ENCODE measurements at regions of chr6 and their contacts with region 1.

Region 1: GRCh38 chr6:104789770-104790190 is 69.9 kb downstream of the HACE1 start:
- DNase-seq: no peak
- H3K4me3 Mint-ChIP-seq: peak overlapping the region; percentile 52
- H3K27ac Mint-ChIP-seq: peak overlapping the region; percentile 97
- H3K4me1 Mint-ChIP-seq: peaks cover 40% of the 10 kb centered on the region
- H3K27me3 Mint-ChIP-seq: no peaks in the 10 kb centered on the region

Region 2: DNA sequence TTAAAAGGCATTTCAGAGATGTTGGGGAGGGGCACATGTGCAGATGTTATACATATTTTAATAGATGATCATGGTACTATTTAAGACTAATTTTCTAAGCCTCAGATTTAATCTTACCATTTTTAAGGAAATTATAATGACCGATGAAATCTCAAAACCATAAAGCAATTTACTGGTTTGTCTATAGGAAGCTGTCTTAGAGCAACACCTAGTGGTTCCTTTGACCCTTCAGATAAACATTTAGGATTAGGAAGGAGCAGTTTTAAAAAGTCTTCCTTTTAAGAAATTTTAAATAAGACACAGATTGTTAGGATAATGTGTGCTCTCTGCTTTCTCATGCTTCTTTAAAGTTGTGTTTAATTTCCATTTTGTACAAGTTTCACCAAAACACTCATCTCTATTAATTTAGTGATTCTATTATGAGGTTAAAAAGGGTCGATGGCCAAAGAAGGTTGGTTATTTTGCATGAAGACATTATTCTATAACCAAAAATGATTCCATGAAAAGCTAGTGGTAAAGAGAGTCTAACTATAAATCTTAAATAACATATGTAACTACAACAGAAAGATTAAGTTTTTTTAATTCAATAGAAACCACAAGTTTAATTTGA is 306.4 kb before region 1 on chr6:
- intact Hi-C with region 1: no loop called
- DNase-seq: no peak
- H3K4me3 Mint-ChIP-seq: no peak overlapping the region
- H3K27ac Mint-ChIP-seq: no peak overlapping the region
- H3K4me1 Mint-ChIP-seq: no peaks in the 10 kb centered on the region
- H3K27me3 Mint-ChIP-seq: no peaks in the 10 kb centered on the region

Region 3: GRCh38 chr6:104580452-104580851 is 209.3 kb before region 1 on chr6:
- intact Hi-C with region 1: no loop called
- DNase-seq: no peak
- H3K4me3 Mint-ChIP-seq: no peak overlapping the region
- H3K27ac Mint-ChIP-seq: no peak overlapping the region
- H3K4me1 Mint-ChIP-seq: no peaks in the 10 kb centered on the region
- H3K27me3 Mint-ChIP-seq: no peaks in the 10 kb centered on the region

Region 4: GRCh38 chr6:104680539-104680938 is 109.2 kb before region 1 on chr6:
- intact Hi-C with region 1: no loop called
- DNase-seq: no peak
- H3K4me3 Mint-ChIP-seq: no peak overlapping the region
- H3K27ac Mint-ChIP-seq: no peak overlapping the region
- H3K4me1 Mint-ChIP-seq: peaks cover 7% of the 10 kb centered on the region
- H3K27me3 Mint-ChIP-seq: no peaks in the 10 kb centered on the region

Region 5: DNA sequence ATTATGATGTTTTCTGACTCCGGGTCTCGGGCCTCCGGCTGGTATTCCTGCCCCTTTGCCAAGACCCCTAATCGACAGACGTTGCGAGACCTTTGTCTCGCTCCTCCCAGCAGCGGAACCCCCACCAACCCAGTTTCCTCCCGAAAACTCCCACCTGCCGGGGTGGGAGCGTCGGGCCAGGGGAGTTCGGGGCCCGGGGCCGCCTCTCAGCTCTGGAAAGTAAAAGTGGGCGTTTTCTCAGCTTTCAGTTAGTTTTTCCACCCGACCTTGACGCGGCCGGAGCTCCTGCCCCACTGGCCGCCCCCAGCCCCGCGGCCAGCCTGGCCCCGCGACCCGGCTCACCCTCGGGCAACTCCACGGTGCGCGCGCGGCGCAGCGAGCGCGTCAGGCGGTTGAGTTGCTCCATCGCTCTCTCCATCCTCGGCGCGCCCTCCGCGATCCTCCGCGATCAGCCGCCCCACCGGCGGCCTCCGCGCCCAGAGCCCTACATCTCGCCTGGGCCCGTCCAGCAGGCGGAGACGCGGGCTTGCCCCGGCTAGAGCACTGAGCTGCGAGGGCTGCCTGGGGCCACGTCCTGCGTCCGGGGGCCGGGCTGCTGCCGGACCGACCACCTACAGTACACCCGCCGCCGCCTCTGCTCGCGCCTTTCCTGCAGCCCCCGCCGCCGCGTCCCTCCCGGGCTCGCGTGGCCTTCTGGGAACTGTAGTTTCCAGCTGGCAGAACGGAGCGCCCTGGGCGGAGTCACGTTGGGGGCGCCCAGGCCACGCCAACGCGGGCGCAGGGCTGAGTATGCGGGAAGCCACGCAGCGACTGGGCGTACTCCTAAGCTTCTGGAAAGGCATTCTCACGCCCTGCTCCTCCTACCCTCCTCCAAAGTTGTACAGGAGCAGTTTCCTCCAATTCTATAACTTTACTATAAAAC is 69.7 kb after region 1 on chr6 and contains the start of gene HACE1:
- intact Hi-C with region 1: loop called (anchors 1 kb)
- DNase-seq: peak; percentile 84
- H3K4me3 Mint-ChIP-seq: peak within 1 kb of the TSS; percentile 94
- H3K27ac Mint-ChIP-seq: peak within 1 kb of the TSS; percentile 82
- H3K4me1 Mint-ChIP-seq: peaks cover 22% of the 10 kb centered on the region
- H3K27me3 Mint-ChIP-seq: peaks cover 2% of the 10 kb centered on the region
- total RNA-seq, gene HACE1: 19.0 and 19.2 TPM in 2 replicates

Region 6: GRCh38 chr6:104940881-104941728 is 151.3 kb after region 1 on chr6:
- intact Hi-C with region 1: loop called (anchors 5 kb)
- DNase-seq: peak; percentile 24
- H3K4me3 Mint-ChIP-seq: peak overlapping the region; percentile 57
- H3K27ac Mint-ChIP-seq: no peak overlapping the region
- H3K4me1 Mint-ChIP-seq: peaks cover 3% of the 10 kb centered on the region
- H3K27me3 Mint-ChIP-seq: peaks cover 37% of the 10 kb centered on the region

Region 7: DNA sequence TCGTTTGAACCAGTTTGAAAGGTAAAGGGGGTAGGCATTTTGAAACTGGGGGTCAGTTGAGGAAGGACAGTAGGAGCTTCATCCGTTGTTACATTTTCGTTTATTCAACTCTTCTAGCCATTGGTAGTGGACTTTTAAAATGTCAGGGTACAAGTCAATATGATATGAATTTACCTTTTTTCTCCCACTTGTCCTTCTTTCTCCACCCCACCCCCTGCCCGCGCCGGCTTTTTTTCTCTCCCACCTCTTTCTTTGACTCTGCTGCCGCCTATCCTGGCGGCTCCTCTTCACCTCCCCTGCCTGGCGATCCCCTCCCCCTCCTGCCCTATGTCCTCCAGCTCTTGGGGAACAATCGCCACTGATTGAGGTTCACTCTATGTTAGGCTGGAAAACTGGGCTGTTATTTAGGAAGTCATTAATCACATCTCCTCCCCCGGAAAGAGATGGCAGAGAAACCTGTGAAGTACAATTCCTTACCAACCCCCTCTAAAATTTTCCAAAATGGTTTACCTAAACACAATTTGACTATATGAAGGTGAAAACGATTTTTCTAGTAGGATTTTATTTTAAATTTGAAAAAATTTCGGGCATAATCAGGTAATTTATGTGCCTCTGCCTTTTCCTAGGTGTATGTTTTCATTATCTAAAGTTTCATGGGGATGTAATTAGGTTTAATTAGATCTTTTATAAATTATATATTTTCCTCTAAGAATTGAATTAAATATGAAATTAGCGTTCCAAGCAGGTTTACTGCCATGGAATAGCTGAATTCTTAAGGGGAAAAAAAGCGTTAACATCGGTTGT is 166.3 kb after region 1 on chr6:
- intact Hi-C with region 1: loop called (anchors 5 kb)
- DNase-seq: no peak
- H3K4me3 Mint-ChIP-seq: no peak overlapping the region
- H3K27ac Mint-ChIP-seq: no peak overlapping the region
- H3K4me1 Mint-ChIP-seq: peaks cover 18% of the 10 kb centered on the region
- H3K27me3 Mint-ChIP-seq: peaks cover 77% of the 10 kb centered on the region

Region 8: GRCh38 chr6:105077596-105078385 is 288.0 kb after region 1 on chr6:
- intact Hi-C with region 1: loop called (anchors 2 kb)
- DNase-seq: no peak
- H3K4me3 Mint-ChIP-seq: no peak overlapping the region
- H3K27ac Mint-ChIP-seq: no peak overlapping the region
- H3K4me1 Mint-ChIP-seq: no peaks in the 10 kb centered on the region
- H3K27me3 Mint-ChIP-seq: peaks cover 42% of the 10 kb centered on the region

Region 9: GRCh38 chr6:105402939-105403935 is 613.5 kb after region 1 on chr6 and contains the start of gene PREP:
- intact Hi-C with region 1: loop called (anchors 5 kb)
- DNase-seq: peak; percentile 82
- H3K4me3 Mint-ChIP-seq: peak within 1 kb of the TSS; percentile 96
- H3K27ac Mint-ChIP-seq: peak within 1 kb of the TSS; percentile 79
- H3K4me1 Mint-ChIP-seq: peaks cover 45% of the 10 kb centered on the region
- H3K27me3 Mint-ChIP-seq: peaks cover 7% of the 10 kb centered on the region
- total RNA-seq, gene PREP: 52.7 and 52.9 TPM in 2 replicates

Measured in activated T-helper 2 cell treated with anti-CD3 and anti-CD28 coated beads, Interferon-gamma antibody, Interleukin-2, Interleukin-4, amounts not matched to agents 10 μg/mL and 5 μg/mL and 100 μg/mL, durations not matched to agents 14 hours and 24 hours and 36 hours (primary cell).